MCF 10A (cell line): ENCODE measurements at regions of chr1 and their contacts with region 1.

Region 1: DNA sequence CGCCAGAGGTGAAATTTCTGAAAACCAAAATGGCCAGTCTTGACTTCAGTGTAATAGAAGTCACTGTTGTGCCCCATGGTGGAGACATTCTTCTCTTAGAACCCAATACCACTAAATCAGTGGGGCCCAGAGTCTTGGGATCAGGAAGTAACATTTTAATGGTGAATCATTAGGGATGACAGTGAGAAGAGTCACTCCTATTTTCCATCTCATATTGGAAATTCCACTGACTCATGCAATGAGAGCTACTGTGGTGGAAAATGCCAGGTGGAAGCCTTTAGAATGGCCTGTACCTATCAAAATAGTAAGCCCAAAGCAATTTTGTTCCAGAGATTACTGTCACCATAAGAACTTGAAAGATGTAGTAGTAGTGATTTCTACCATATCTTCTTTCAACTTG is 20.6 kb upstream of the PPM1J start:
- DNase-seq: peak; percentile 64
- H3K4me3 Mint-ChIP-seq: no peak overlapping the region
- H3K27ac Mint-ChIP-seq: peak overlapping the region; percentile 49
- H3K4me1 Mint-ChIP-seq: no peaks in the 10 kb centered on the region
- H3K27me3 Mint-ChIP-seq: no peaks in the 10 kb centered on the region
- CTCF ChIP-seq: no peak

Region 2: GRCh38 chr1:112466078-112466660 is 269.6 kb before region 1 on chr1:
- CTCF ChIA-PET with region 1: no interaction called
- POLR2A ChIA-PET with region 1: no interaction called
- intact Hi-C with region 1: no loop called
- DNase-seq: peak; percentile 89
- H3K4me3 Mint-ChIP-seq: peak overlapping the region; percentile 67
- H3K27ac Mint-ChIP-seq: peak overlapping the region; percentile 87
- H3K4me1 Mint-ChIP-seq: peaks cover 15% of the 10 kb centered on the region
- H3K27me3 Mint-ChIP-seq: no peaks in the 10 kb centered on the region
- CTCF ChIP-seq: peak; percentile 76

Region 3: DNA sequence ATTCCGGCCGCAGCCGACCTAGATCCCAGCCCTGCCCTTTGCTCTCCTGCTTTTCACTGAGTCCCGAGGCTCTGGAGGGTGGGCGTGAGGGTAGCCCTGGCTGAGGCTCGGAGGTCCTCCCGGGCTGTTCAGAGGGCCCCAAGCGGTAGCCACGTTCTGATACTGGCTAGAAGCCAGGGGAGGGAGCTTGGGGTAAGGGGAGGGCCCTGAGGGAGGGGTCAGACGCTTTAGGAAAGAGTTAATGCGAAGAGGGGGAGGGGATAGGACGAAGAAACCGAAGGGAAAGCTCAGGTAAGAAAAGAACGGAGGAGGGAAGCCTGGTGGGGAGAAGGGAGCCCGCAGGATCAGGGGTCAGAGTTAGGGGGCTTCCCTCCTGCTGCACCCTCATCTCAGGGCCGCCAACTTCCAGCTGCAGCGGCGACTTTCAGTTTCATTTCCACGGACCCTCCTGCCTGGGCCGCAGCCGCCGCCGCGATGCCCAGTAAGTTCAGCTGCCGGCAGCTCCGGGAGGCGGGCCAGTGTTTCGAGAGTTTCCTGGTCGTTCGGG is 61.2 kb before region 1 on chr1 and contains the start of gene MOV10:
- CTCF ChIA-PET with region 1: no interaction called
- POLR2A ChIA-PET with region 1: no interaction called
- intact Hi-C with region 1: no loop called
- DNase-seq: peak; percentile 84
- H3K4me3 Mint-ChIP-seq: peak within 1 kb of the TSS; percentile 99
- H3K27ac Mint-ChIP-seq: peak within 1 kb of the TSS; percentile 100
- H3K4me1 Mint-ChIP-seq: peaks cover 35% of the 10 kb centered on the region
- H3K27me3 Mint-ChIP-seq: no peaks in the 10 kb centered on the region
- CTCF ChIP-seq: no peak
- total RNA-seq, gene MOV10: 54.9 and 55.6 TPM in 2 replicates

Region 4: GRCh38 chr1:112762541-112763517 is 27.1 kb after region 1 on chr1:
- CTCF ChIA-PET with region 1: no interaction called
- POLR2A ChIA-PET with region 1: interaction called, 17 read pairs
- intact Hi-C with region 1: no loop called
- DNase-seq: peak; percentile 56
- H3K4me3 Mint-ChIP-seq: peak overlapping the region; percentile 41
- H3K27ac Mint-ChIP-seq: peak overlapping the region; percentile 82
- H3K4me1 Mint-ChIP-seq: peaks cover 32% of the 10 kb centered on the region
- H3K27me3 Mint-ChIP-seq: no peaks in the 10 kb centered on the region
- CTCF ChIP-seq: no peak